A673 (cell line): ENCODE measurements at regions of chr6 and their contacts with region 1.

Region 1: GRCh38 chr6:2497922-2498623 is 252.6 kb downstream of the MYLK4 start:
- DNase-seq: no peak
- H3K4me3 ChIP-seq: no peak overlapping the region
- H3K27ac ChIP-seq: no peak overlapping the region
- H3K4me1 ChIP-seq: no peaks in the 10 kb centered on the region
- H3K27me3 ChIP-seq: no peaks in the 10 kb centered on the region
- CTCF ChIP-seq: no peak

Region 2: DNA sequence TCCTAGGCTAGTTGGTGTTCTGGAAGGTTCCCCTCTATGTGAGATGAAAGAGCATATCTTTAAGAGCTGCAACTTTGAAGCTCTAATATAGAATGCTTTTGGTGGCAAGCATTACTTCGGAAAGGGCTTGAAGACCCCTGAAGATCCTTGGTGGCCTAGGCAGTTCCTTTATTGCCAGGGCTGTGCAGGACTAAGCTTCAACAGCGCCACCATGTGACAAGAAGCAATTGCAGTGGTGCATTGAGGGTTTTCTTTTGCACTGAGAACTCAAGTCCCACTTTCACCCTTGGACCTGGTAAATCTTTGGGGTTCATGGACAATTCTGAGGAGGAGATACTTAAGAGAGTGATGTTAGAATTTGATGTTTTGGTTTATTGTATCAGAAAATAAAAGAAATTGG is 15.3 kb before region 1 on chr6:
- CTCF ChIA-PET with region 1: no interaction called
- POLR2A ChIA-PET with region 1: no interaction called
- intact Hi-C with region 1: loop called (anchors 1 kb)
- DNase-seq: no peak
- H3K4me3 ChIP-seq: no peak overlapping the region
- H3K27ac ChIP-seq: no peak overlapping the region
- H3K4me1 ChIP-seq: no peaks in the 10 kb centered on the region
- H3K27me3 ChIP-seq: no peaks in the 10 kb centered on the region
- CTCF ChIP-seq: 0 out of 2 replicates have a peak, but pooled peaks have one; percentile 24

Region 3: GRCh38 chr6:2971420-2972218 is 473.5 kb after region 1 on chr6 and contains the start of gene SERPINB6:
- CTCF ChIA-PET with region 1: no interaction called
- POLR2A ChIA-PET with region 1: no interaction called
- intact Hi-C with region 1: no loop called
- DNase-seq: peak; percentile 58
- H3K4me3 ChIP-seq: peak within 1 kb of the TSS; percentile 63
- H3K27ac ChIP-seq: peak within 1 kb of the TSS; percentile 71
- H3K4me1 ChIP-seq: no peaks in the 10 kb centered on the region
- H3K27me3 ChIP-seq: no peaks in the 10 kb centered on the region
- CTCF ChIP-seq: 0 out of 2 replicates have a peak, but pooled peaks have one; percentile 18
- total RNA-seq, gene SERPINB6: 34.8 and 37.5 TPM in 2 replicates